Left colon (tissue), 2 donors: ENCODE measurements at regions of chr11 and their contacts with region 1.

Region 1: GRCh38 chr11:1837171-1838076 is 1.4 kb upstream of the TNNI2 start:
- DNase-seq: peak; percentile 59 to 75
- ATAC-seq: no peak

Region 2: GRCh38 chr11:1207401-1208143 is 629.9 kb before region 1 on chr11:
- intact Hi-C with region 1: no loop called
- DNase-seq: peak; percentile 7 to 22
- ATAC-seq: no peak

Region 3: GRCh38 chr11:2151500-2152257 is 314.3 kb after region 1 on chr11:
- intact Hi-C with region 1: loop called in 1 of 2 experiments (anchors 10 kb)
- DNase-seq: peak; percentile 60 to 84
- ATAC-seq: peak; percentile 77